SK-N-SH (cell line): ENCODE measurements at regions of chr1 and their contacts with region 1.

Region 1: GRCh38 chr1:75233302-75233929 is 99.2 kb downstream of the LHX8 start:
- DNase-seq: peak; percentile 9
- H3K4me3 ChIP-seq: peak overlapping the region in 1 of 2 experiments; percentile 6; a peak in 1 of 4 replicates
- H3K27ac ChIP-seq: no peak overlapping the region; a peak in 1 of 4 replicates
- H3K4me1 ChIP-seq: peaks cover 0 to 2% of the 10 kb centered on the region in 2 experiments; a peak in 1 of 4 replicates
- H3K27me3 ChIP-seq: no peaks in the 10 kb centered on the region
- CTCF ChIP-seq: peak; percentile 89
- EP300 ChIP-seq: no peak
- RAD21 ChIP-seq: peak; percentile 85

Region 2: GRCh38 chr1:75203415-75204277 is 29.8 kb before region 1 on chr1:
- CTCF ChIA-PET with region 1: interaction called, 12 read pairs
- POLR2A ChIA-PET with region 1: no interaction called
- DNase-seq: peak; percentile 33
- H3K4me3 ChIP-seq: peak overlapping the region in 1 of 2 experiments; percentile 42; a peak in 1 of 4 replicates
- H3K27ac ChIP-seq: no peak overlapping the region
- H3K4me1 ChIP-seq: no peaks in the 10 kb centered on the region
- H3K27me3 ChIP-seq: no peaks in the 10 kb centered on the region; the same call in 1 of the 2 replicates
- CTCF ChIP-seq: peak; percentile 97
- EP300 ChIP-seq: no peak
- RAD21 ChIP-seq: peak; percentile 93

Region 3: DNA sequence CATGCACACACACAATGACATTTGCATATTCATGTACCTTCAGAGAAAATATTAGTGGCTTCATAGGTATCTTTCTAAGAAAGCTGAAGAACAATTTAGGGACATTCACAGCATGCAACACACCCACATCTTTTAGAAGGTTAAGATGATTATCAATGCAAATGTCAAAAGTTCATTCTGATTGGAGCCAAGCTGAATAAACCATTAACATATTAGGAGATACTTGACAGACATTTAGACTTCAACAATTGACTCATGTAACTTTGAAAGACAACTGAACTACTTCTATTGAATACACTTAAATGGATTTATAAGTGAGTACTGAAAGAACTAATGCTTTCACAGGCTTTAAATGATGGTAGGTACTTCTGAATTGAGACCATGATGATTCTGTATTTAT is 11.8 kb after region 1 on chr1:
- CTCF ChIA-PET with region 1: interaction called, 40 read pairs
- POLR2A ChIA-PET with region 1: no interaction called
- DNase-seq: no peak
- H3K4me3 ChIP-seq: no peak overlapping the region
- H3K27ac ChIP-seq: no peak overlapping the region
- H3K4me1 ChIP-seq: no peaks in the 10 kb centered on the region
- H3K27me3 ChIP-seq: no peaks in the 10 kb centered on the region
- CTCF ChIP-seq: no peak
- EP300 ChIP-seq: no peak
- RAD21 ChIP-seq: no peak

Region 4: DNA sequence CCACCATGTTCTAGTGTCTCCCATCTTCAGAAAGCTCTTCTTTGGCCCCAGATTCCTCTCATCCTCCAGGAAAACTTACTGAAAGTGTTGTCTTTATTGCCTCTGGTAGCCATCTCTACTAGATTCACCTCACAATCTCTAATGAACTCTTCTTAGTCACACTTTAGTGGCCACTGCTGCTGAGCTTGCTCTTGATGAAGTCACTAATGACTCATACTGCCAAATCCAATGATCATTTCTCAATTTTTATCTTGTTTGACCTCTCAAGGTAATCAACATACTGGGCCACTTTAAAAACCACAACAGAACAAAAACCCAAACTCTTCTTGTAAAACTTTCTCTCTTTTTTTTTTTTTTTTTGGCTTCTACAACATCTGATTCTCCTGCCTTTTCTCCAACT is 97.2 kb after region 1 on chr1:
- CTCF ChIA-PET with region 1: no interaction called
- POLR2A ChIA-PET with region 1: no interaction called
- DNase-seq: no peak
- H3K4me3 ChIP-seq: no peak overlapping the region
- H3K27ac ChIP-seq: no peak overlapping the region
- H3K4me1 ChIP-seq: no peaks in the 10 kb centered on the region
- H3K27me3 ChIP-seq: no peaks in the 10 kb centered on the region
- CTCF ChIP-seq: no peak
- EP300 ChIP-seq: no peak
- RAD21 ChIP-seq: no peak

Region 5: GRCh38 chr1:75423616-75424015 is 190.2 kb after region 1 on chr1:
- CTCF ChIA-PET with region 1: interaction called, 20 read pairs
- POLR2A ChIA-PET with region 1: no interaction called
- DNase-seq: peak; percentile 70
- H3K4me3 ChIP-seq: no peak overlapping the region
- H3K27ac ChIP-seq: peak overlapping the region in 1 of 2 experiments; percentile 83; a peak in 2 of 4 replicates
- H3K4me1 ChIP-seq: peaks cover 0 to 14% of the 10 kb centered on the region in 2 experiments; a peak in 2 of 4 replicates
- H3K27me3 ChIP-seq: no peaks in the 10 kb centered on the region
- CTCF ChIP-seq: peak; percentile 19
- EP300 ChIP-seq: peak in 1 of 2 experiments; percentile 94; a peak in 2 of 4 replicates
- RAD21 ChIP-seq: peak; percentile 74

Region 6: GRCh38 chr1:75632350-75632949 is 399.0 kb after region 1 on chr1:
- CTCF ChIA-PET with region 1: interaction called, 20 read pairs
- POLR2A ChIA-PET with region 1: no interaction called
- DNase-seq: peak; percentile 34
- H3K4me3 ChIP-seq: no peak overlapping the region
- H3K27ac ChIP-seq: no peak overlapping the region
- H3K4me1 ChIP-seq: no peaks in the 10 kb centered on the region
- H3K27me3 ChIP-seq: no peaks in the 10 kb centered on the region
- CTCF ChIP-seq: peak; percentile 86
- EP300 ChIP-seq: no peak
- RAD21 ChIP-seq: peak; percentile 89